Common myeloid progenitor, CD34-positive (primary cell): ENCODE measurements at regions of chr2 and their contacts with region 1.

Region 1: DNA sequence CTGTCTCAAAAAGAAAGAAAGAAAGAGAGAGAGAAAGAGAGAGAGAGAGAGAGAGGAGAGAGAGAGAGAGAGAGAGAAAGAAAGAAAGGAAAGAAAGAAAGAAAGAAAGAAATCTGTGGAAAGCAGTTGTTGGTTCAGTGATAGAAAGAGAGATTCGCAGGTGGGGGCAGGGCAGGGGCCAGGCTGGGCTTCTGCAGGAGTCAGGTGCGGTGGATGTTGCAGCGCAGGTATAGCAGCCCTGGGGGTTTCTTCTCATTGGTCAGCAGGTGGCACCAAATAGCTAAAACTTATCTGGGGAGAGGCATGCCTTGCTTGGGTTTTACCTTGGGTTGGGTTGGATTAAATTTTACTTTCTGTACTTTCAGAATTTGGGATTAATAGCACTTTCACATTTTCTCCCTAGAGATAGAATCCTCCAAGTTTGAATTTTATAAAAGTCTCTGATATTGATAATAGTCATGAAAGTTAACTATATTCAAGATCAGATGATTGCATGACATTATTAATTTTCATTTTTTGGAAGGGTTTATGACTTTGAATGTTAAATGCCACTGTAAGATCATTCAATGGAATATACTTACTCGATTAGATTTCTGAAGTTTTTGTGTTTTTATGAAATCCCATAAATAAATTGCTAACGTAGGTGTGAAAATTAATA is 66.6 kb downstream of the SPTBN1 start:
- DNase-seq: peak; percentile 76 to 85 (median 84)
- H3K4me3 ChIP-seq: no peak overlapping the region
- H3K27ac ChIP-seq: no peak overlapping the region
- H3K4me1 ChIP-seq: peaks cover 0 to 15% (median 3%) of the 10 kb centered on the region in 4 experiments
- H3K27me3 ChIP-seq: no peaks in the 10 kb centered on the region

Region 2: DNA sequence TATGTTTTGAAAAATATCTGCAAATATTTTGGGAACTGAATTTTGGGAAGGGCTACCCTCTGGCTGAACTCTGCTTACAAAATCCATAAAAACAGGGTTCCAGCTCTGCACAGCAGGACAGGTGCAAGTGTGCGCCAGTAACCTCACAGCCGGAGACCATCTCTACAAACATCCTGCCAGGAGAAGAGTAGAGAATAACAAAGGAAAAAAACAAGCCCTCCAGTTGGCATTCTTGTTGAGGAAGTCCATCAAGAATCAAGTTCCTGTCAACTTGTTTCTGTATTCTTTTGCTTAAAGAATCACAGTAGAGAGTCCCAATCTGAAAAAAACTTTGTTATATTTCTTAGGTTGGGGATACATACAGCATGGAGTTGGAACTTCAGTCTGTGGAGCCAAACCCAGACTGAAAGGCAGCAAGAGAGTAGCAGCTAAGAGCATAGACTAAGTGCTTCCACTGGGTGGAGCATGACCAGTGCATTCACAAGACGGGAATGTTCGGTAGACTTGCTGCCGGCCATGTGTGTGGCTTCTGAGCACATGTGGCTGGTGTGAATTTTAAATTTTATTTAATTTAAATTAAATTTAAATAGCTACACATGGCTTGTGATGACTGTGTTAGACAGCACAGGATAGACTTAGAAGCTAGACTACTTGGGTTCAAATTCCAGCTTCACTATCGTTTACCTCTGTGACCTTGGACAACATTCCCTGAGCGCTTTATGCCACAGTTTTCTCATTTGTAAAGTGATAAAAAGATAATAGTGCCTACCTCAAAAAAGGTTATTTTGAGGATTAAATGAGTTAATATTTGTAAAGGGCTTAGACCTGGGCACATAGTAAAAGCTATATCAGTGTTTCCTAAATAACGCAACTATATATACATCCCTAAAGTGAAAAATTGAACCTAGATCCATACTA is 24.7 kb before region 1 on chr2:
- CTCF ChIA-PET with region 1: interaction called, 10 read pairs
- POLR2A ChIA-PET with region 1: no interaction called
- DNase-seq: peak in 2 of 3 donors; percentile 32 to 44
- H3K4me3 ChIP-seq: no peak overlapping the region
- H3K27ac ChIP-seq: no peak overlapping the region
- H3K4me1 ChIP-seq: peaks cover 7 to 25% (median 18%) of the 10 kb centered on the region in 4 experiments
- H3K27me3 ChIP-seq: no peaks in the 10 kb centered on the region

Region 3: DNA sequence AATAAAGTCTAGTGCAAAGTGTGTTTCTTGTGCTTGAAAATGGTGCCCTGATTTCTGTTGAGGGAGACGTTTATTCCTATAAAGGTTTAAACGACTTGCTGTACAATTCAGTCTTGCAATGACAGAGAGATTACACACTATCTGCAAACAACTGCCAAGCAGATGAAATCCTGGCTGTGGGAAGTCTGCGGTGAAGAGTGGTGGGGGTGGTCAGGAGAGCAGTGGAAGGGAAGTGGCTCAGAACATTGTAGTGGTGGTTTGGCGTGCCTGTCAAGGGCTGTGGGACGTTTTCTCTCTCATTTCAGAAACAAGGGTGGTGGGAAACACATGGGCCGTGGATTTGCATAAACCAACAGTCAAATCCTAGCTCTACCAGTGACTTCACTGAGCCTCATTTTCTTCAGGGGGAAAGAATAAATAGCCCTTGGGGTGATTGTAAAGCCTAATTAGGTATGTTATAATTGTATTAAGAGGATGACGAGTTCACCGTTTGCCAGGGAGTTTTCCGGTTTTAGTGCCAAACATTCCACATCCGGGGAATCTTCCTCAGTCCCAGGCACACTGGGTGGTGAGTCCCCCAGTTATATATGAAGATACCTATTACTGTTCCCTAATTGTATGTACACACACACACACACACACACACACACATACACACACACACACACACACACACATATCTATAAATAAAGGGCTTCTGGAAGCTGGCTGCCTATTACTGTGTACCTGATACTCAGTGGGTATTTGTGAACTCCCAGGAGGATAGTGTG is 48.4 kb after region 1 on chr2:
- CTCF ChIA-PET with region 1: interaction called, 11 read pairs
- POLR2A ChIA-PET with region 1: no interaction called
- DNase-seq: peak; percentile 87 to 98 (median 97)
- H3K4me3 ChIP-seq: peak overlapping the region in 5 of 7 experiments; percentile 20 to 62 (median 38)
- H3K27ac ChIP-seq: peak overlapping the region; percentile 26 to 72
- H3K4me1 ChIP-seq: peaks cover 52 to 87% (median 74%) of the 10 kb centered on the region in 4 experiments
- H3K27me3 ChIP-seq: no peaks in the 10 kb centered on the region

Region 4: GRCh38 chr2:54613794-54614257 is 91.1 kb after region 1 on chr2:
- CTCF ChIA-PET with region 1: interaction called, 13 read pairs
- POLR2A ChIA-PET with region 1: no interaction called
- DNase-seq: no peak
- H3K4me3 ChIP-seq: no peak overlapping the region
- H3K27ac ChIP-seq: no peak overlapping the region
- H3K4me1 ChIP-seq: peaks cover 0 to 18% (median 8%) of the 10 kb centered on the region in 4 experiments
- H3K27me3 ChIP-seq: no peaks in the 10 kb centered on the region

Region 5: GRCh38 chr2:54657664-54658083 is 134.9 kb after region 1 on chr2:
- CTCF ChIA-PET with region 1: interaction called, 25 read pairs
- POLR2A ChIA-PET with region 1: no interaction called
- DNase-seq: peak in 2 of 3 donors; percentile 41 to 49
- H3K4me3 ChIP-seq: no peak overlapping the region
- H3K27ac ChIP-seq: no peak overlapping the region
- H3K4me1 ChIP-seq: no peaks in the 10 kb centered on the region
- H3K27me3 ChIP-seq: no peaks in the 10 kb centered on the region

Region 6: GRCh38 chr2:54775710-54776109 is 253.0 kb after region 1 on chr2:
- CTCF ChIA-PET with region 1: no interaction called
- POLR2A ChIA-PET with region 1: no interaction called
- DNase-seq: peak in 2 of 3 donors; percentile 41 to 43
- H3K4me3 ChIP-seq: no peak overlapping the region
- H3K27ac ChIP-seq: no peak overlapping the region
- H3K4me1 ChIP-seq: no peaks in the 10 kb centered on the region
- H3K27me3 ChIP-seq: no peaks in the 10 kb centered on the region